Activated CD4-positive, alpha-beta memory T cell treated with anti-CD3 and anti-CD28 coated beads, Interleukin-2, amount 10 ng/mL, durations not matched to agents 7 days and 5 days (primary cell): ENCODE measurements at regions of chr11 and their contacts with region 1.

Region 1: GRCh38 chr11:72642884-72643511 is 31.2 kb downstream of the PDE2A start:
- DNase-seq: peak; percentile 66
- H3K4me3 Mint-ChIP-seq: no peak overlapping the region
- H3K27ac Mint-ChIP-seq: no peak overlapping the region
- H3K4me1 Mint-ChIP-seq: peaks cover 8% of the 10 kb centered on the region
- H3K27me3 Mint-ChIP-seq: peaks cover 4% of the 10 kb centered on the region

Region 2: GRCh38 chr11:72525466-72525865 is 117.5 kb before region 1 on chr11:
- CTCF ChIA-PET with region 1: no interaction called
- POLR2A ChIA-PET with region 1: no interaction called
- DNase-seq: no peak
- H3K4me3 Mint-ChIP-seq: no peak overlapping the region
- H3K27ac Mint-ChIP-seq: no peak overlapping the region
- H3K4me1 Mint-ChIP-seq: peaks cover 13% of the 10 kb centered on the region
- H3K27me3 Mint-ChIP-seq: peaks cover 4% of the 10 kb centered on the region

Region 3: GRCh38 chr11:72585762-72586311 is 57.2 kb before region 1 on chr11:
- CTCF ChIA-PET with region 1: interaction called, 29 read pairs
- POLR2A ChIA-PET with region 1: no interaction called
- DNase-seq: peak; percentile 75
- H3K4me3 Mint-ChIP-seq: peak overlapping the region; percentile 77
- H3K27ac Mint-ChIP-seq: no peak overlapping the region
- H3K4me1 Mint-ChIP-seq: peaks cover 45% of the 10 kb centered on the region
- H3K27me3 Mint-ChIP-seq: peaks cover 43% of the 10 kb centered on the region